ENCODE measurements at regions of chr6 and their contacts with region 1.

Region 1: GRCh38 chr6:30821862-30822782 is 62.2 kb upstream of the DDR1 start:
- DNase-seq: no peak
- ATAC-seq: peak; percentile 52
- H3K4me3 ChIP-seq: no peak overlapping the region
- H3K27ac ChIP-seq: peak overlapping the region; percentile 42
- H3K4me1 ChIP-seq: peaks cover 21% of the 10 kb centered on the region
- H3K27me3 ChIP-seq: no peaks in the 10 kb centered on the region
- CTCF ChIP-seq: peak; percentile 50 to 61 (median 52); a peak in 5 of 6 replicates
- EP300 ChIP-seq: 0 out of 4 replicates have a peak, but pooled peaks of 1 of the 2 experiments have one; percentile 15
- POLR2A ChIP-seq: no peak
- RAD21 ChIP-seq: peak; percentile 54

Region 2: GRCh38 chr6:30678964-30679726 is 143.0 kb before region 1 on chr6:
- CTCF ChIA-PET with region 1: interaction called, 12 read pairs
- POLR2A ChIA-PET with region 1: no interaction called
- RAD21 ChIA-PET with region 1: interaction called, 7 read pairs
- SMC1A ChIA-PET with region 1: interaction called, 5 read pairs
- in situ Hi-C with region 1: loop called (anchors 5 kb)
- intact Hi-C with region 1: loop called (anchors 5 kb)
- DNase-seq: no peak
- ATAC-seq: peak; percentile 79
- H3K4me3 ChIP-seq: peak overlapping the region; percentile 100
- H3K27ac ChIP-seq: peak overlapping the region; percentile 65
- H3K4me1 ChIP-seq: peaks cover 8% of the 10 kb centered on the region
- H3K27me3 ChIP-seq: no peaks in the 10 kb centered on the region
- CTCF ChIP-seq: peak; percentile 97 to 98 (median 98); a peak in 5 of 6 replicates
- EP300 ChIP-seq: no peak
- POLR2A ChIP-seq: 0 out of 2 replicates have a peak, but pooled peaks have one; percentile 29
- RAD21 ChIP-seq: peak; percentile 97

Region 3: DNA sequence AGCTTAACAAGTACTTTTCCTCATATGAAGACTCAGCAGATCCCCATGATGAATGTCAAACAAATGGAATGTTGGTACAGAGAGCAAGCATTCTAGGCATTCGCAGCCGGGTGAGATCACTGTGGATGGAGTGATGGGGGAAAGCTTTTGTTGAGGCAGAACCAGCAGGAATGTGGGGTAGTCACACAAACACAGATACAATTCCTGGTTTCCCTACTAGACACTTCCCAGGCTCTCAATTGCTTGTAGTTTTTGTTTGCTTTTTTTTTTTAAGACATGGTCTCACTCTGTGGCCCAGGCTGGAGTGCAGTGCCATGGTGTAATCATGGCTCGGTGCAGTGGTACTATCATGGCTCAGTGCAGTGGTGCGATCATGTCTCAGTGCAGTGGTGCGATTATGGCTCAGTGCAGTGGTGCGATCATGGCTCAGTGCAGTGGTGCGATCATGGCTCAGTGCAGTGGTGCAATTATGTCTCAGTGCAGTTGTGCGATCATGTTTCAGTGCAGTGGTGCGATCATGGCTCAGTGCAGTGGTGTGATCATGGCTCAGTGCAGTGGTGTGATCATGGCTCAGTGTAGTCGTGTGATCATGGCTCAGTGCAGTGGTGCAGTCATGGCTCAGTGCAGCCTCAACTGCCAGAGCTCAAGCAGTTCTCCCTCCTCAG is 62.4 kb before region 1 on chr6:
- CTCF ChIA-PET with region 1: interaction called, 23 read pairs
- POLR2A ChIA-PET with region 1: interaction called, 10 read pairs
- RAD21 ChIA-PET with region 1: interaction called, 19 read pairs
- SMC1A ChIA-PET with region 1: interaction called, 217 read pairs
- in situ Hi-C with region 1: no loop called
- intact Hi-C with region 1: loop called (anchors 1 kb)
- DNase-seq: no peak
- ATAC-seq: no peak
- H3K4me3 ChIP-seq: no peak overlapping the region
- H3K27ac ChIP-seq: peak overlapping the region; percentile 35; the same call in 1 of the 2 replicates
- H3K4me1 ChIP-seq: peaks cover 22% of the 10 kb centered on the region; the same call in 1 of the 2 replicates
- H3K27me3 ChIP-seq: no peaks in the 10 kb centered on the region
- CTCF ChIP-seq: no peak
- EP300 ChIP-seq: no peak
- POLR2A ChIP-seq: no peak
- RAD21 ChIP-seq: no peak

Region 4: DNA sequence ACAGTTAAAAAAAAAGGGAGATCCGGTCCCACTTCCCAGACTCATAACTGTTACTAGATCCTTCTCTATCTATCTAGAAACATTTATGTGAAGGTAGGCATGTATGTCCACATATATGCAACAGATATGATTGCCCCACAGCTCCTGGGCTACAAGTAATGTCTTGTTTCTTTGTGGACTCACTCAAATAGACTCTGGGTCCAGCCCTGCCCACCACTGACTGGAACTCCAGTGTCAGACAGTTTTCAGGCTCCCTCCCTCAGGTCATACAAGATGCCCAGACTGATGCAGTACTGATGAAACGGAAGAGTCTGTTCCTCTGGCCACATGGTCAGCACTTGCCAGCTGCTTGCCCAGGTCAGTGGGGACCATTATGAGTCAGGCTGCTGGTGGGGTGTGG is 47.0 kb before region 1 on chr6:
- CTCF ChIA-PET with region 1: interaction called, 36 read pairs
- POLR2A ChIA-PET with region 1: interaction called, 9 read pairs
- RAD21 ChIA-PET with region 1: interaction called, 4 read pairs
- SMC1A ChIA-PET with region 1: interaction called, 217 read pairs
- in situ Hi-C with region 1: no loop called
- intact Hi-C with region 1: no loop called
- DNase-seq: no peak
- ATAC-seq: no peak
- H3K4me3 ChIP-seq: no peak overlapping the region
- H3K27ac ChIP-seq: no peak overlapping the region
- H3K4me1 ChIP-seq: no peaks in the 10 kb centered on the region
- H3K27me3 ChIP-seq: no peaks in the 10 kb centered on the region
- CTCF ChIP-seq: no peak
- EP300 ChIP-seq: no peak
- POLR2A ChIP-seq: no peak
- RAD21 ChIP-seq: no peak

Region 5: GRCh38 chr6:30787954-30788353 is 34.2 kb before region 1 on chr6:
- CTCF ChIA-PET with region 1: interaction called, 8 read pairs
- POLR2A ChIA-PET with region 1: interaction called, 4 read pairs
- RAD21 ChIA-PET with region 1: interaction called, 4 read pairs
- SMC1A ChIA-PET with region 1: interaction called, 32 read pairs
- in situ Hi-C with region 1: no loop called
- intact Hi-C with region 1: no loop called
- DNase-seq: no peak
- ATAC-seq: peak; percentile 51
- H3K4me3 ChIP-seq: no peak overlapping the region
- H3K27ac ChIP-seq: no peak overlapping the region
- H3K4me1 ChIP-seq: peaks cover 6% of the 10 kb centered on the region; the same call in 1 of the 2 replicates
- H3K27me3 ChIP-seq: no peaks in the 10 kb centered on the region
- CTCF ChIP-seq: no peak
- EP300 ChIP-seq: no peak
- POLR2A ChIP-seq: no peak
- RAD21 ChIP-seq: no peak

Region 6: DNA sequence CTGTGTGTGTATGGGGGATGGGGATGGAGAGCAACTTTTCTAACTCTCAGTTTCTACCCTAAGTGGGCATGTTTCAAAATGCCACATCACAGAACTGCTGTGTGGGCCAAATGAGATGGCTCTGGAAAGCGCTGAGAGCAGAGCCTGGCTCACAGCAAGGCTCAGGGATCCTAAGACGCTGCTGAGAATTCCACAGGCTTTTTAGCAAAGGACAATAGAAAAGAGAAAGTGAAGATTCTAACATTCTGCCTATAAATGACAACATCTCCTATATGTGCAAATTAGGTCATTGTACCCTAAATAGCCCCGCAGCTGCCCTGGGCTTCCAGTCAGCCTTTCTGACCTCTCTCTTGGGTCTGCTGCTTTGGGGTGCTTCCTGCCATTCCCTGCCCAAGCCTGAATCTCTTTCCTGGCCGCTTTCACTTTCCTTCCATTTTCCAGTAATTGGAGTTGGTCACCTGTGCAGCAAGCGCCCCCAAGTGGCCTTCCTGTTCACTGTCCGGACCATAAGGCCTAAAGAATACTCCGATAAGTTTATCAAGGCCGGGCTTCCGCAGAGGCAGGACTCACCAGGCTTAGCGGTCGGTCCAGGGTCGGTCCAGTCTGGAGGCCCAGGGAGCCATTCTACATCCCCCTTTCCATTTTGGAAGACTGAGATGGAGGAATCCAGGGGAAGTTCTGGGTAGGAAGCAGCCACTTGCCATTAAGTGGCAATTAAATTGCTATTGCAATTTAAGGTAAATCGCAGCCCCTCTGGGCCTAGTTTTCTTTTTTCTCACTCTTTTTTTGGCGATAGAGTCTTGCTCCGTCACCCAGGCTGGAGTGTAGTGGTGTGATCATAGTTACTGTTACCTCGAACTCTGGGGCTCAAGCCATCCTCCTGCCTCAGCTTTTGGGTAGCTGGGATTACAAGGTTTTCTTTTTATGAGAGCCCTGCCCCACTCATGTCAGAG is 55.6 kb after region 1 on chr6:
- CTCF ChIA-PET with region 1: interaction called, 90 read pairs
- POLR2A ChIA-PET with region 1: interaction called, 14 read pairs
- RAD21 ChIA-PET with region 1: interaction called, 144 read pairs
- SMC1A ChIA-PET with region 1: interaction called, 72 read pairs
- in situ Hi-C with region 1: loop called (anchors 5 kb)
- intact Hi-C with region 1: no loop called
- DNase-seq: peak; percentile 59
- ATAC-seq: peak; percentile 91
- H3K4me3 ChIP-seq: peak overlapping the region; percentile 61
- H3K27ac ChIP-seq: peak overlapping the region; percentile 68
- H3K4me1 ChIP-seq: peaks cover 21% of the 10 kb centered on the region
- H3K27me3 ChIP-seq: no peaks in the 10 kb centered on the region
- CTCF ChIP-seq: peak; percentile 91 to 95 (median 93); a peak in 5 of 6 replicates
- EP300 ChIP-seq: no peak
- POLR2A ChIP-seq: 0 out of 2 replicates have a peak, but pooled peaks have one; percentile 28
- RAD21 ChIP-seq: peak; percentile 95

Region 7: GRCh38 chr6:31079656-31080261 is 257.6 kb after region 1 on chr6:
- CTCF ChIA-PET with region 1: interaction called, 25 read pairs
- POLR2A ChIA-PET with region 1: interaction called, 3 read pairs
- RAD21 ChIA-PET with region 1: interaction called, 9 read pairs
- SMC1A ChIA-PET with region 1: interaction called, 6 read pairs
- in situ Hi-C with region 1: loop called (anchors 5 kb)
- intact Hi-C with region 1: no loop called
- DNase-seq: no peak
- ATAC-seq: peak; percentile 87
- H3K4me3 ChIP-seq: no peak overlapping the region
- H3K27ac ChIP-seq: no peak overlapping the region
- H3K4me1 ChIP-seq: no peaks in the 10 kb centered on the region
- H3K27me3 ChIP-seq: no peaks in the 10 kb centered on the region
- CTCF ChIP-seq: peak; percentile 74 to 85 (median 79)
- EP300 ChIP-seq: no peak
- POLR2A ChIP-seq: no peak
- RAD21 ChIP-seq: peak; percentile 85